Aorta (tissue), 5 donors: ENCODE measurements at regions of chr17 and their contacts with region 1.

Region 1: DNA sequence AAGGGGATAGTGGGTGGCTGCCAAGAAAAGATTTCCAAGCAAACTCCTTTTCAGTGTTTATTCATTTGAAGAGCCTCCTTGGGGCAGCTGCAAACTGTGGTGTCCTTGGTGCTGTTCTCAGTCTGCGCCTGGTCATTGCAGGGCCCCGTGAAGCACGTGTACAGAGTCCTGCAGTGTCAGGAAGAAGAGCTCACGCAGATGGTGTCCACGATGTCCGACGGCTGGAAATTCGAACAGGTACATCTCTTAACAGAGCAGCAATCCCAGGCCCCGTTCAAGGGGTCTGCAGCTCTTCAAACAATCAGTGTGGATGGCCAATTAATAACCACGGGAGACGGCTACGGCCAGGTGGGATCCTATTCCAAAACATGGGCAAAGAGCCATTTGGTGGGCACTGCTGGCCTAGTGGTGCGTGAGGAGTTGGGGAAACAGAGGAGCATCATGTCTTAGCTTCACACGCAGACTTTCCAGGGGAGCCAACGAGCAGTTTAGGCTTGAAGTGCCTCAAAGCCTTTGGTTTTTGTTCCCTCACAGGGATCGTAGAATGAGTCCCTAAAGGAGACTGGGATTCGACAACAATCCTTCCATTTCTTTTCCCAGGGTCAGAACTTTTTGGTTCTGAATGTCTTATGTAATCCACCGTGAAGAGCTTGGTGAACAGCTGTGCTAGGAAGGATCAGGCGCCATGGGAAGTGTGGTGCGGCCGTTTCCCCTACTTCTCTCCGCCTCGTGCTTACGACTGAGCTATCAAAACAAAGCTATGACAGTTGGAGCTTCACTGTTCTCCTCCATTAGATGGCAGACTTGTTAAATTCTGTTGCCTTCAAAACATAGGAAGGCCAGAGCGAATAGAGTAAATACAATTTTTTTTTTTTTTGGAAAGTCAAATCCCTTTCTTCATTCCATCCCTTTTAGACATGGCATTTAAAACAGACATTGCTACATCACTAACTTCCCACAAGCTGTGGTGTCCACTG is 12.6 kb downstream of the KCTD2 start:
- DNase-seq: peak; percentile 40 to 61
- ATAC-seq: peak; percentile 54
- H3K4me3 ChIP-seq: no peak overlapping the region
- H3K27ac ChIP-seq: no peak overlapping the region
- H3K4me1 ChIP-seq: no peaks in the 10 kb centered on the region
- H3K27me3 ChIP-seq: no peaks in the 10 kb centered on the region

Region 2: GRCh38 chr17:75159191-75160031 is 99.8 kb after region 1 on chr17:
- intact Hi-C with region 1: no loop called
- DNase-seq: no peak
- ATAC-seq: no peak
- H3K4me3 ChIP-seq: no peak overlapping the region
- H3K27ac ChIP-seq: no peak overlapping the region
- H3K4me1 ChIP-seq: no peaks in the 10 kb centered on the region
- H3K27me3 ChIP-seq: no peaks in the 10 kb centered on the region

Region 3: DNA sequence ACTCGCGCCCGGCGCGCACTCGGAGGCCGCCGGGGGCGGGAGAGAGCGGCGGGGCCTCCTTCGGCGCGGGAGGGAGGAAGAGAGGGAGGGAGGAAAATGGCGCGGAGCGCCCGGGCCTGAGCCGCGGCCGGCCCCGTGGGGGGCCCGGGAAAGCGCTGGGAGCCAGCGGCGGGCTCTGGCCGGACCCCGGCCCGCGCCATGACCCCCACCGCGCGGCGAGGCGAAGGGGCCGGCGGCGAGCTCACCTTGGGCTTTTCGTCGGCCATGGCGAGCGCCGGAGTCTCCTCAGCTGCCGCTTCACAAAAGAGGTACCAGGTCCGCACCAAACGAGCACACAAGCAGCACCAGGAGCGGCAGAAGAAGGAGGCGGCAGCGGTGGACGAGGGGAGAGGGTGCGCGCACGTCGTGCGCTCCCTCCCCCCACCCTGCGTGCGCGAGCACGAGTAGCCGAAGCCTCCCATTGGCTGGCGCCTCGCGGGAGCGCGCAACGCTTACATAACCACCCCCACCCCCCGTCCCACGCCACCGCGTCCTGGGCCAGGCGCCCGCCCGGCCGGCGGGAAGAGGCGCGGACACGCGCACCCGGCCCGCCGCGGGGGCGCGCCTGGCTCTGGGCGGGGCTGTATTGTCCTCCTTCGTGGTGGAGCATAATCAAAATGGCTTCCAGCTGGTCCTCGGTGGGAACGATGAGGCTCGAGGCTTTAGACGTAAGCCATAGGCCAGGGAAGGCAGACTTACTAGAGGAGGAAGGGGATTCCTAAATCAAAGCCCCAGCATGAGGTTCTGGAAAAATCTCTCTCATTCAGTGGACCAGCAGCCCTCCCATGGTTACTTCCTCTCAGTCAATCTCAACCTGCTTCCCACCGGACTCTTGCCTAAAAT is 123.2 kb after region 1 on chr17 and contains the start of gene SUMO2:
- intact Hi-C with region 1: loop called in 1 of 2 experiments (anchors 10 kb)
- DNase-seq: peak; percentile 96 to 98
- ATAC-seq: peak; percentile 98
- H3K4me3 ChIP-seq: peak within 1 kb of the TSS; percentile 85 to 99
- H3K27ac ChIP-seq: peak within 1 kb of the TSS; percentile 93 to 98
- H3K4me1 ChIP-seq: no peaks in the 10 kb centered on the region
- H3K27me3 ChIP-seq: no peaks in the 10 kb centered on the region
- total RNA-seq, gene SUMO2: 262 to 280 TPM